Activated B cell treated with CpG ODN at 0.5 μM for 24 hours (primary cell): ENCODE measurements at regions of chr4 and their contacts with region 1.

Region 1: DNA sequence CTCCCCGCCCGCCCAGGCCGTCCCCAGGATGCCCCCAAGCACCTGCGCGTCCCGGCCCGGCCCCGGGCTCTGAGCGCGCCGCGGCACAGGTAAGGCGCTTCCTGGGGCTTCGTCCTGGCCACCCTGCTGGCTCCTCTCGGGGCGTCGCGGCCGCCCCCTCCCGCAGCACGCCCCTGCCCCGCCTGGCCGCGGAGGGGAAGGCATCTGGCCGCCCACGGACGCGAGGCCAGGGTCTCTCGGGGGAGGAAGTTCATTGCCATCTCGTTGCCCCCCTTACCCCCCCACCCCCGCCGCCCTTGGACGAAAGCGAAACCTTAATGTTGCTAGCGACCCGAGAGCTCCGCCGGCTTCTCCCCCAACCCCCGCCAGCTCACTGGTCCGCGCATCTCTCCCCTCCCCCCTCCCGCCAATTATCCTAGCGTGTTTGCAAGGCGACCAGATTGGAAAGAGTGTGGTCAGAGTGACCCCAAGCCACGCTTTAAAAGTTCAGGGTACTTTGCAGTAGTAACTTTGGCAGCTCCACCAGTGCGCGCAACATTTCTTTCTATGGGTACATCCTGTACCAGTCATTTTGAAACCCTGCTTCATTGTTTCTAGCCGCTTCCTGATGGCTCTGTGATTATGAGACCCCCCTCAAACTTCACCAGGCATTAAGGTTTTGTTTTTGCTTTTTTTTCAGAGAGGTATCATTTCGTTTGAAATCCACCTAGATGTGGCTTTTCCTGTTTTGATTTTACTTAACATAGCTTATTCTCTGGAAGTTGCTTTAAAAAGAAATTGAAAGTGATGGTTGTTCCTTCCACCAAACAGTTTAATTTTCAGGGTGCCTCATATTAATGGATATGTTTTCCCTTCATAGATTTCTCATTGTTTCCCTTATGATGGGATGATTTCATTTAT is 626 bp downstream of the TBC1D1 start:
- DNase-seq: no peak
- ATAC-seq: peak; percentile 47
- H3K4me3 Mint-ChIP-seq: peak overlapping the region; percentile 94
- H3K27ac Mint-ChIP-seq: peak overlapping the region; percentile 97
- H3K4me1 Mint-ChIP-seq: peaks cover 57% of the 10 kb centered on the region
- H3K27me3 Mint-ChIP-seq: no peaks in the 10 kb centered on the region
- CTCF ChIP-seq: no peak

Region 2: DNA sequence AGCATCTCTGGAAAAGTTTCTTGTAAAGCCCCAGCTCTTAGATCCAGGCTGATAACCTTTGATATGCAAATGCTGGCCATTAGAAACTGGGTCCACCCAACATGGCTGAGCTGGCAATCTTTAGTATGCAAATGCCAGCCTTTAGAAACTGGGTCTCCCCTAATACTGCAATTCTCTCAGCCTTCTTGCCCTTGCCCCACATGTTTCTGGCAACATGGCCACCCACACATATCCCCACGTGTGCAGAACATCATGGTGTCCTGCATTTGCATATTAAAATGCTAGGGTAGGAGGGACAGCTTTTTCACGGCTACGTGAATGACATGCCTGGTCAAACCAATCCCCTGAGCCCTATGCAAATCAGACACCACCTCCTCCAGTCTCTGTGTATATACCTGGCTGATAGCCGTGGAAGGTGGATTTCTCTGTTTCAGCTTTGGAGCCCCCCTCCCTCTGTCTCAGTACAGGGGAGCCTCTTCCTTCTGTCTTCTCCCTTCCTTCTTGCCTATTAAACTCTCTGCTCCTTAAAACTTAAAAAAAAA is 991.0 kb before region 1 on chr4:
- CTCF ChIA-PET with region 1: no interaction called
- POLR2A ChIA-PET with region 1: no interaction called
- intact Hi-C with region 1: no loop called
- DNase-seq: no peak
- ATAC-seq: no peak
- H3K4me3 Mint-ChIP-seq: no peak overlapping the region
- H3K27ac Mint-ChIP-seq: no peak overlapping the region
- H3K4me1 Mint-ChIP-seq: no peaks in the 10 kb centered on the region
- H3K27me3 Mint-ChIP-seq: no peaks in the 10 kb centered on the region
- CTCF ChIP-seq: no peak

Region 3: GRCh38 chr4:37603070-37603468 is 288.4 kb before region 1 on chr4:
- CTCF ChIA-PET with region 1: interaction called, 3 read pairs
- POLR2A ChIA-PET with region 1: no interaction called
- intact Hi-C with region 1: loop called (anchors 1 kb)
- DNase-seq: peak; percentile 59
- ATAC-seq: peak; percentile 84
- H3K4me3 Mint-ChIP-seq: no peak overlapping the region
- H3K27ac Mint-ChIP-seq: no peak overlapping the region
- H3K4me1 Mint-ChIP-seq: peaks cover 3% of the 10 kb centered on the region
- H3K27me3 Mint-ChIP-seq: peaks cover 2% of the 10 kb centered on the region
- CTCF ChIP-seq: peak; percentile 95

Region 4: GRCh38 chr4:37802068-37802666 is 89.3 kb before region 1 on chr4:
- CTCF ChIA-PET with region 1: interaction called, 5 read pairs
- POLR2A ChIA-PET with region 1: interaction called, 5 read pairs
- intact Hi-C with region 1: loop called (anchors 1 kb)
- DNase-seq: no peak
- ATAC-seq: no peak
- H3K4me3 Mint-ChIP-seq: no peak overlapping the region
- H3K27ac Mint-ChIP-seq: no peak overlapping the region
- H3K4me1 Mint-ChIP-seq: peaks cover 4% of the 10 kb centered on the region
- H3K27me3 Mint-ChIP-seq: peaks cover 1% of the 10 kb centered on the region
- CTCF ChIP-seq: no peak

Region 5: DNA sequence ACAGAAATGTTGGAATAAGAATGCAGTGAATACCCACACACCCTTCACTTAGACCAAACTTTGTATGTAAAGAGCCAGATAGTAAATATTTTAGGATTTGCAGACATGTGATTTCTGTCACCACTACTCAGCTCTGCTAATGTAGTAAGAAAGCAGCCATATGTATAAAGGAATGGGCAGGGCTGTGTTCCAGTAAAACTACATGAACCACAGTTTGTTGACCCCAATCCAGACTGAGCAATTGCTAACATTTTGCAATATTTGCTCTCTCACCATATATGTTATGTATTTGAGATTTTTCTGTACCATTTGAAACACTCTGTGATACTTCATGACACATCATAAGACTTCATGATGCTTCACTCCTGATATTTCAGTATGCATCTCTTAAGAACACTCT is 32.6 kb before region 1 on chr4:
- CTCF ChIA-PET with region 1: no interaction called
- POLR2A ChIA-PET with region 1: no interaction called
- intact Hi-C with region 1: no loop called
- DNase-seq: no peak
- ATAC-seq: no peak
- H3K4me3 Mint-ChIP-seq: no peak overlapping the region
- H3K27ac Mint-ChIP-seq: no peak overlapping the region
- H3K4me1 Mint-ChIP-seq: no peaks in the 10 kb centered on the region
- H3K27me3 Mint-ChIP-seq: no peaks in the 10 kb centered on the region
- CTCF ChIP-seq: no peak

Region 6: DNA sequence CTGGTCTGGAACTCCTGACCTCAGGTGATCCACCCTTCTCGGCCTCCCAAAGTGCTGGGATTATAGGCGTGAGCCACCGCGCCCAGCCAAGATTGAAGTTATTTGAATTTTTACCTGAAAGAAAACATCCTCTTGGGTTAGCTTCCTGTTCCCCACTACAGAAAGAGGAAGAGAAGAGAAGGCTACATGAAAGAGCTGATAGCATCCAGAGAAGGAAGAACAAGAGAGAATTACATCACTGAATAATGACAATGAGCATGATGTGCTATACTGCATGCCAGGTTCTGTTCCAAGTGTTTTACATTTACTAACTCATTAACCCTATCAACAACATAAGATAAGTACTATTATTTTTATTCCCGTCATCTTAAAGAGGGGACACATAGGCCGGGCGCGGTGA is 12.1 kb before region 1 on chr4:
- CTCF ChIA-PET with region 1: no interaction called
- POLR2A ChIA-PET with region 1: interaction called, 11 read pairs
- intact Hi-C with region 1: loop called (anchors 1 kb)
- DNase-seq: no peak
- ATAC-seq: no peak
- H3K4me3 Mint-ChIP-seq: no peak overlapping the region
- H3K27ac Mint-ChIP-seq: no peak overlapping the region
- H3K4me1 Mint-ChIP-seq: peaks cover 12% of the 10 kb centered on the region
- H3K27me3 Mint-ChIP-seq: peaks cover 2% of the 10 kb centered on the region
- CTCF ChIP-seq: no peak

Region 7: GRCh38 chr4:38034986-38035882 is 143.7 kb after region 1 on chr4:
- CTCF ChIA-PET with region 1: interaction called, 5 read pairs
- POLR2A ChIA-PET with region 1: no interaction called
- intact Hi-C with region 1: loop called (anchors 2 kb)
- DNase-seq: no peak
- ATAC-seq: peak; percentile 60
- H3K4me3 Mint-ChIP-seq: no peak overlapping the region
- H3K27ac Mint-ChIP-seq: no peak overlapping the region
- H3K4me1 Mint-ChIP-seq: peaks cover 2% of the 10 kb centered on the region
- H3K27me3 Mint-ChIP-seq: no peaks in the 10 kb centered on the region
- CTCF ChIP-seq: peak; percentile 67

Region 8: DNA sequence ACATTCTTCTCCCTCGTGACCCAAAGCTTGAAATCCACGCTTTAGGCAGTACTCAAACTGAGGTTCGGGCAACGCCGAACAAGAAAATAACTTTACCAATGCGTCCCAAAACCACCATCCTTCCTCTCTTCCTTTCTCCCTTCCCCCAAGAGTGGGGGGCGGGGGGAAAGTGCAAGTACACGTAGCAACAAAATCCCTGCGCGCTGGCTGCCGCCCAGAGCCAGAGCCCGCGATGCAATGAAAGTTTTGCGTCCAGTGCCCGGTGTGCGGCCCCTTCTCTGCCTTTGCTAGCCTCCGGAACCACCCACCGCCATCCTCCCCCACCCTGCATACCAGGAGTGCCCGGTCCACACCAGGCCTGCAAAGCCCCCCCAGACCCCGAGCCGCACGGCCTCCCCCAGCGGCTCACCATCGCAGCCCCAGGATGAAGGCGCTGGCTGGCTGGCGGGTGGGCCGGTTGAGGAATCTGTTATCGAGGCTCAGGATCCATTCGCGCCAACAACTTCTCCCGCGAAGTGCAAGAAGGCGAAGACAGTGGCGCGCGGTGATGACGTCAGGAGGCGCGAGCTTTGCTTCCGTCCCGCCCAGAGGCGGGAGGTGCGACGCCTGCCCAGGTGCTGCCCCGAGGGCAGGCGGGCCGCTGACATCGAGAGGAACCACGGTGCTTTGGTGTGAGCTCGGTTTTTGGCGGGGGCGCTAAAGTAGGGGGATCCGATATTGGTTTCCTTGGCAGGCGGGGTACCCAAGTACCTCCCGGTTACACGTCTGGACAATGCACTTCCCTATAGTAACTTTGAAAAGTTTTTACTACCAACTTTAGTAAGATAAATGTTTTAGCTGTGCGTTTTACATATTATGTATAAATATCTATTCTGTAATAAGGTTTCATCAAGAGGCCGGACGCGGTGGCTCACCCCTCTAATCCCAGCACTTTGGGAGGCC is 1474.6 kb after region 1 on chr4 and contains the start of gene RFC1:
- CTCF ChIA-PET with region 1: no interaction called
- POLR2A ChIA-PET with region 1: no interaction called
- intact Hi-C with region 1: loop called (anchors 10 kb)
- DNase-seq: peak; percentile 92
- ATAC-seq: peak; percentile 94
- H3K4me3 Mint-ChIP-seq: peak within 1 kb of the TSS; percentile 91
- H3K27ac Mint-ChIP-seq: peak within 1 kb of the TSS; percentile 88
- H3K4me1 Mint-ChIP-seq: peaks cover 39% of the 10 kb centered on the region
- H3K27me3 Mint-ChIP-seq: no peaks in the 10 kb centered on the region
- CTCF ChIP-seq: no peak
- total RNA-seq, gene RFC1: 44.8 and 45.9 TPM in 2 replicates